Activated naive CD4-positive, alpha-beta T cell treated with anti-CD3 and anti-CD28 coated beads for 36 hours (primary cell): ENCODE measurements at regions of chr20 and their contacts with region 1.

Region 1: DNA sequence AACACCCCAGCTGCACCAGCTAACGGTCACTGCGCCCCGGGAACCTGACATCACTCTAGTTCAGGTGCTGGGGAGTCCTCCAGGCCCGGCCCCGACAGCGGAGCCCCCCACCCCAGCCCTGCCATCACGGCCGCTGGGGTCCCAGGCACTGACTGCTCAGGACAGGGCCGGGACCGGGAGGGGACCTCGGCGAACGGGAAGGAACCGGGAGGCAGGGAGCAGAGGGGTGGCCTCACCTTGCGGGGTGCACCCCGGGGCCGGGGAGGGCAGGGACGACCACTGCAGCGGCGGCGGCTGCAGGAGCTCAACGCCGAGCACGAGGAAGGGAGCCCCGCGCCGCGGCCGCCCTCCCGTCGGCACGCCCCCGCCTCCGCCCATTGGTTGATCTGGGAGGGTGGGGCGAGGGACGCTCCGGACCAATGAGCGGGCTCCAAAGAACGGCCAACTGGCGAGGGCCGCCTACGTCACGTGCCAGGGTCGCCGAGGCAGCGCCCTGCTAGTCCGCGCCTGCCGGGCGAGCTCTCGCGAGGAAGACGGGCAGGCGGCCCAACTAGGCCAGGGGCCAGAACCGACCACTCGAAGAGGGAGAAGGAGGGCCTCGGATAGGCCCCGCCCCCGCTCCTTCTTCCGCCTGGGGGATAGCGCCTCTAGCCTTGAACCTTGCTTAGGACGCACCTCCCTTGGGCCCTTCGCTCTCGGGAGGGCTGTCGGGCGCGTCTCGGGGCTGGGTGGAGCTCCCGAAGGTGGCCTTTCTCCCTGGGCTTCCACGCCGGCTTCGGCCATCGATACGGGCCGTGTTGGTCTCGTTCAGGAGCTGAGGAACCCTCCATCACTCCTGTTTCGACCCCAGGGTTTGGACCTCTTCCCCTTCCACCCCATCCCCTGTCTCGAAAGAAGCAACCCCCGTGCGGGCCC is at the start of gene ADISSP:
- DNase-seq: peak; percentile 98
- H3K4me3 Mint-ChIP-seq: peak within 1 kb of the TSS; percentile 82
- H3K27ac Mint-ChIP-seq: peak within 1 kb of the TSS; percentile 82
- H3K4me1 Mint-ChIP-seq: peaks cover 33% of the 10 kb centered on the region
- H3K27me3 Mint-ChIP-seq: no peaks in the 10 kb centered on the region
- total RNA-seq, gene ADISSP: 47.9 to 50.4 TPM

Region 2: GRCh38 chr20:3407771-3408637 is 359.7 kb before region 1 on chr20:
- CTCF ChIA-PET with region 1: no interaction called
- intact Hi-C with region 1: loop called (anchors 5 kb)
- DNase-seq: peak; percentile 63
- H3K4me3 Mint-ChIP-seq: peak overlapping the region; percentile 95
- H3K27ac Mint-ChIP-seq: peak overlapping the region; percentile 57
- H3K4me1 Mint-ChIP-seq: peaks cover 20% of the 10 kb centered on the region
- H3K27me3 Mint-ChIP-seq: peaks cover 4% of the 10 kb centered on the region

Region 3: DNA sequence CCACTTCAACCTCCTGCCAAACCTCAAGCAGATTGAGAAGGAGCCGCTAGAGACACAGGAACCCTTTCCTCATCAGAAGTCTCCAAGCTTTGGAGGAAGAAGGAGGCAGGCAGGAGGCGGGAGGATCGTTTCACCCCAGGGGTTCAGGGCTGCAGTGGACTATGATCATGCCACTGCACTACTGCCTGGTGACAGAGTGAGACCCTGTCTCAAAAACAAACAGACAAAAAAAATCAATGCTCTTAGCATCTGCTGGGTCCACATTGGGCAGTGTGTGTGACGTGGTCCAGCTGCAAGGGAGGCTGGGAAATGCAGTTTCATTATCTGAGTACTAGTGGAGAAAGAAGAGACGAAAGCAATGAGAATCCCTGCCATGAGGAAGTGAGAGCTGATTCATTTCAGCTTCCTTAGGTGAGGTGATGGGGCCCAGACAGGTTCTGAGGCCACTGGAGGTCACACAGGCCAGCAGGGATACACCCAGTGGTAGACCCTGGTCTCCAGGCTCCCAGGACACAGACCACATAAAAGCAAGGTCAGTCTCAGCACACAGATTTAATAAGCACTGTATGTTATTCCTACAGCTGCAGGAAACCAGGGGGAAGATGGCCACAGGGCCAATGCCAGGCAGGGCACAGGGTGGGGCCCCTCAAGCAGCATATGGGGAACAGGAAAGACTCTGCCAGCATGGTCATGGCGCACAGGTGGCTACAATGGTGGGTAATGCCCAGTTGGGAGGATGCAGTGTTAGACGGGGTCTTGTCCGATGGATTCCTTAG is 108.8 kb before region 1 on chr20:
- CTCF ChIA-PET with region 1: no interaction called
- intact Hi-C with region 1: no loop called
- DNase-seq: peak; percentile 45
- H3K4me3 Mint-ChIP-seq: no peak overlapping the region
- H3K27ac Mint-ChIP-seq: no peak overlapping the region
- H3K4me1 Mint-ChIP-seq: peaks cover 4% of the 10 kb centered on the region
- H3K27me3 Mint-ChIP-seq: peaks cover 29% of the 10 kb centered on the region

Region 4: GRCh38 chr20:3696200-3696599 is 71.5 kb before region 1 on chr20:
- CTCF ChIA-PET with region 1: no interaction called
- intact Hi-C with region 1: no loop called
- DNase-seq: peak; percentile 16
- H3K4me3 Mint-ChIP-seq: no peak overlapping the region
- H3K27ac Mint-ChIP-seq: no peak overlapping the region
- H3K4me1 Mint-ChIP-seq: no peaks in the 10 kb centered on the region
- H3K27me3 Mint-ChIP-seq: no peaks in the 10 kb centered on the region

Region 5: DNA sequence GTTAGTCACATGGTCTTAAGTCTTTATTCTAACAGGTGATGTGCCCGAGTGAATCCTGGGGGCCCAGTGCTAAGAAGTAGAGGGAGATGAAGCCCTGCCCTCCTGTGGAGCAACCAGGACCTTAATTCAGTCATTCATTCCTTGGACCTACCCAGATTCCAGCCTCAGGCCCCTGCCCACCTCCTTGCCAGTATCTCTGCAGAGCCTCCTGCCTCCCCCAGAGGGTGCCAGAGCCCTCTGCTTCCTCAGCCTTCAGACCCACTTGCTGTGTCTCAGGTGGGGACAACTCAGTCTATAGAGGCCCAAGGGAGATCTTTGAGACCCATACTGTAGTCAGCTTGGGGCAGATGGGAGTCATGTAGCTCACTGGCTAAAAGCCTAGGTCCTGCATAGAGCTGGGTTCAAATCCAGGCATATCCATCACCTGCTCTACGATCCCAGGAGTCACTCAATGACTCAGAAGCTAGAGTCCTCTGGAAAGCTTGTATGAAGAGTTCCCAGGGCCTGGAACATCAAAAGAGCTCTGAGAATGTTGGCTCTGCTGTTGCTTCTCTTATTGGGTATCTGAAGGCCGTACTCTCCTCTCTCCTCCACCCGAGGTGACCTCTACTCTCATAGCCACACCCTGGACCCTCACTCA is 51.4 kb before region 1 on chr20:
- CTCF ChIA-PET with region 1: interaction called, 6 read pairs
- intact Hi-C with region 1: loop called (anchors 1 kb)
- DNase-seq: peak; percentile 24
- H3K4me3 Mint-ChIP-seq: no peak overlapping the region
- H3K27ac Mint-ChIP-seq: no peak overlapping the region
- H3K4me1 Mint-ChIP-seq: no peaks in the 10 kb centered on the region
- H3K27me3 Mint-ChIP-seq: peaks cover 5% of the 10 kb centered on the region

Region 6: GRCh38 chr20:3781153-3781910 is 13.6 kb after region 1 on chr20 and contains the start of gene SPEF1:
- CTCF ChIA-PET with region 1: interaction called, 6 read pairs
- intact Hi-C with region 1: loop called (anchors 1 kb)
- DNase-seq: peak; percentile 62
- H3K4me3 Mint-ChIP-seq: peak within 1 kb of the TSS; percentile 38
- H3K27ac Mint-ChIP-seq: no peak within 1 kb of the TSS
- H3K4me1 Mint-ChIP-seq: peaks cover 52% of the 10 kb centered on the region
- H3K27me3 Mint-ChIP-seq: peaks cover 16% of the 10 kb centered on the region
- total RNA-seq, gene SPEF1: not detected

Region 7: DNA sequence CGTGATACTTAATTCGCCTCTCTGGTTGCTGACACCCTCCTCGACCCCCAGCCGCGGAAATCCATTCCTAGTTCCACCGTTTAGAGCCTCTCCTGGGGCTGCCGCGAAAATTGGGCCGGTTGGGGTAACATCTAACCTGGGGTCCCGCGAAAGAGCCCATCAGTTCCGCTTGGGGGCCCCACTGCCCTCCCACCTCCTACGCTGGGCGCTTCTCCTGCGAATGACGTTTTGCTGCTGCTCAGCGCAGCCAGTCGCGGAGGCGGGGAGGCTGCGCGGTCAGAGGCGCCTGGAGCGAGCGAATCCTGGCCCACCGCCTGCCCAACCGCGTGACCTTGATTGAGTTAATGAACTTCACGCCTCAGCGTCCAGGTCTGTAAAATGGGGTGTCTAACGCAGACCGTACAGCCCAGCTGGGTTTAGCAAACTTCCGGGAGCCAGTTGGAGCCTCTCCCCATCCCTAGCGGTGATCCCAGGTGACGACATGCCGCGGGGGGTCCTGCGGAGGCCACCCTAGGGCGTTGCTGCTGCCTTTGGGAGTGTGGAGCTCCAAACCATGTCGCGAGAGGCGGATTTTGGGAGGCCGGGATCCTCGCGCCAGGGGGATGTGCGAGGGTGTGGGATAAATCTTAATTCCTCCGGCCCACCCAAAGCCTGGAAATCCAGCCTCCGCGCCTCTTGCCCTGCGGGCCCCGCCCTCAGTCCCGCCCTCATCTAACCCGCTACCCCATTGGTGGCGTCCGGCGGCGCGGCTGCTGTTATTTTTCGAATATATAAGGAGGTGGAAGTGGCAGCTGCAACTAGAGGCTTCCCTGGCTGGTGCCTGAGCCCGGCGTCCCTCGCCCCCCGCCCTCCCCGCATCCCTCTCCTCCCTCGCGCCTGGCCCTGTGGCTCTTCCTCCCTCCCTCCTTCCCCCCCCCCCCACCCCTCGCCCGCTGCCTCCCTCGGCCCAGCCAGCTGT is 28.1 kb after region 1 on chr20 and contains the start of gene CDC25B:
- CTCF ChIA-PET with region 1: no interaction called
- intact Hi-C with region 1: loop called (anchors 1 kb)
- DNase-seq: peak; percentile 95
- H3K4me3 Mint-ChIP-seq: peak within 1 kb of the TSS; percentile 94
- H3K27ac Mint-ChIP-seq: peak within 1 kb of the TSS; percentile 97
- H3K4me1 Mint-ChIP-seq: peaks cover 49% of the 10 kb centered on the region
- H3K27me3 Mint-ChIP-seq: no peaks in the 10 kb centered on the region
- total RNA-seq, gene CDC25B: 94.8 to 97.7 TPM

Region 8: DNA sequence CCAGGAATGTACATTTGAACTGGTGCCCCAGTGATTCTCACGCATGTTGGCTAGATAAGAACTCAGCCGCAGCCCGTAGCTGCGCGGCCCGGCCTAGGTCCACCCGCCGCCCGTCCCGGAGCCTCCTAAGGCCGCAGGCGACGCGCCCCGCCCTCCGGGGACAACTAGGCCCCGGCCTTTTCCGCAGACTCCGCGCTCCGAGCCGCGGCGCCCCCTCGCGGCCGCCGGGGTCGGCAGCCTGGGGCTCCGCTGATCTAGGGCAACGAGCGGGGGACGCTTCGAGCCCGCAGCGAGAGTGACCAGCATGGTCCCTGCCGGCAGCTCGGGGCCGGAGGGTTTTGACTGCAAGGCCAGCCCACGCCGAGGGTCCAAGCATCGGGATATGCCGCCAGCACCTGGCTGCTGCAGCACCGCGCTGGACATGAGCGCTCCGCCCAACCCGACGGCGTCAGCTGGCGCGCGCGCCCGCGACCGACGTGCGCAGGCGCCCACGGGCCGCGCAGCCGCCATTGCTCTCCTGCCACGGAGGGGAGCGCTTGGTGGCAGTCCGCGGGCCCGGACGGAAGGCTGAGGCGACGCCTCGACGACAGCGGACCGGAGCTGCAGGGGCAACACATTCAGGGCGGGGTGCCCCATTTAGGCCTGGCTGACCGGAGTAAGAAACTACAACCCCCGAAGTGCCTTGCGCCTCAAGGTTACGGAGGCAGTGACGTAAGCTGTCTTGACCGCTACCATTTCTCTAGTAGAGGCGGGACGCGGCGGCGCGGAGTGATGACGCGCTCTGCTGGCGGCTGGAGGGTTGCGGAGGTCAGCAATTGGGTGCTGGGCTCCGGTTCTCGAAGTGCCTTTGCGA is 52.6 kb after region 1 on chr20 and contains the start of gene AP5S1:
- CTCF ChIA-PET with region 1: interaction called, 8 read pairs
- intact Hi-C with region 1: loop called (anchors 1 kb)
- DNase-seq: peak; percentile 96
- H3K4me3 Mint-ChIP-seq: peak within 1 kb of the TSS; percentile 85
- H3K27ac Mint-ChIP-seq: peak within 1 kb of the TSS; percentile 94
- H3K4me1 Mint-ChIP-seq: peaks cover 36% of the 10 kb centered on the region
- H3K27me3 Mint-ChIP-seq: no peaks in the 10 kb centered on the region
- total RNA-seq, gene AP5S1: 8.0 to 8.2 TPM

Region 9: DNA sequence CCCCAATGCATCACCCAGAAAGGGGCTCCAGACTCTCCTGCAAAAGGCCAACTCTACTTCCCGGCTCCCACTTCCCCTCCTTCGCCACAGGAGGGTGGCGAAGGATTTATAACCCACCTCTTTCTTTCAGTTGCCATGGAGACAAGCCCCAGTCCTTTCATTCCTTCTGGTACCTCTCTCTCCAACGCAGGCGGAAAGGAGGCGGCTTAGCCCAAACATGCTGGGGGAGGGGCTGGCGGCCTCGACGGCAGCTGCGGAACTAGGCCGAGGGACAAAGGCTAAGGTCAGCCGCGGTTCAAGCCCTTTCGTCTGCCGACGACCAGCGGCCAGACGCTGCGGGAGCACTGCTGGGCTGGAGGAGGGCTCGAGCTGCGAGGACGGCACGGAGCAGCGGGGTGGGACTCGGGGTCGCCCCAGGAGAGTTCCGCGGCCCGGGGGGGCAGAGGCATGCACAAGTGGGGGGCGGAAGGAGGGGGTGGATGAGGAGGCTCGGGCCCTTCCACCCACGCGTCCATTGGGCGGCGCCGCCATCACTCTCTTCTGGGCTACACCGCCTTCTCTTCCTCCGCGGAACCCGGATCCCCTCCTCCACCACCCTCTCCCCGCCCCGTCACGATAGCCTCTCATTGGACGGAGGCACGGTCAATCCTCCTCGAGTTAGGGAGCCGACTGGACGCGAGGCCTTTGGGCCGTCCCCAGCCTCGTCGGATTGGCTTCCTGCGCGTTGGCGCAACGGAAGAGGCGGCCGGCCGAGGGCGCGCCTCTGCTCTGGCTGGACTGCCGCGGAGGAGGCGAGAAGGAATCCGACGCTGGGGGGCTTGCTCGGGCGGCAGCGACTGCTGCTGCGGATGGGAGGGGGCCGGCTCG is 121.2 kb after region 1 on chr20 and contains the start of gene PANK2:
- CTCF ChIA-PET with region 1: interaction called, 5 read pairs
- intact Hi-C with region 1: loop called (anchors 1 kb)
- DNase-seq: peak; percentile 100
- H3K4me3 Mint-ChIP-seq: peak within 1 kb of the TSS; percentile 98
- H3K27ac Mint-ChIP-seq: peak within 1 kb of the TSS; percentile 96
- H3K4me1 Mint-ChIP-seq: peaks cover 42% of the 10 kb centered on the region
- H3K27me3 Mint-ChIP-seq: no peaks in the 10 kb centered on the region
- total RNA-seq, gene PANK2: 39.8 to 44.7 TPM